ENCODE measurements at regions of chr19 and their contacts with region 1.

Region 1: GRCh38 chr19:19139876-19140229 is 1.6 kb upstream of the TMEM161A start:
- H3K4me3 ChIP-seq: no peak overlapping the region
- H3K27ac ChIP-seq: no peak overlapping the region
- H3K4me1 ChIP-seq: peaks cover 3% of the 10 kb centered on the region; the same call in 1 of the 2 replicates
- CTCF ChIP-seq: no peak

Region 2: DNA sequence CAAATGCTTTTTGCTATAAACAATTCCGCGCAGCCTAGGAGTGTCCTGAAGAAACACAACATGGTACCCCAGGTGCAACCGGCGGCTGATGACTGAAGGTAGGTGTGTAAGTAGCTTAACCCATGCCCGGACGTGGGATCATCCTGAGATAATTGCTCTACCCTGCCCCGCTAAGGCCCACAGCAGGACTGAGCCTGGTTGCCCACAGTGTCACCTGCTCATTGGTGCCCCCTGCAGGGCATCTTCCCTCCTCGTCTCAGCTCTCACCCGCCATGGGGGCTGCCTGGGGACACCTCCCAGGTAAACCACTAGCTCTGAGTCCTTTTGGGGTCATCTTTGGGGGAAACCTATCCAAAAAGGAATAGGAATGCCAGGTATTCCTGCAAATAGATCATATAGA is 23.9 kb before region 1 on chr19:
- CTCF ChIA-PET with region 1: interaction called, 12 read pairs
- POLR2A ChIA-PET with region 1: no interaction called
- H3K4me3 ChIP-seq: no peak overlapping the region
- H3K27ac ChIP-seq: no peak overlapping the region
- H3K4me1 ChIP-seq: 0 out of 2 replicates have a peak, but pooled peaks cover 3% of the 10 kb centered on the region
- CTCF ChIP-seq: peak; percentile 40; the same call in 1 of the 2 replicates

Region 3: GRCh38 chr19:19170053-19170872 is 30.4 kb after region 1 on chr19 and contains the start of gene MEF2B:
- CTCF ChIA-PET with region 1: interaction called, 26 read pairs
- POLR2A ChIA-PET with region 1: no interaction called
- H3K4me3 ChIP-seq: peak within 1 kb of the TSS; percentile 6; the same call in 1 of the 2 replicates
- H3K27ac ChIP-seq: no peak within 1 kb of the TSS
- H3K4me1 ChIP-seq: no peaks in the 10 kb centered on the region
- CTCF ChIP-seq: no peak

Region 4: DNA sequence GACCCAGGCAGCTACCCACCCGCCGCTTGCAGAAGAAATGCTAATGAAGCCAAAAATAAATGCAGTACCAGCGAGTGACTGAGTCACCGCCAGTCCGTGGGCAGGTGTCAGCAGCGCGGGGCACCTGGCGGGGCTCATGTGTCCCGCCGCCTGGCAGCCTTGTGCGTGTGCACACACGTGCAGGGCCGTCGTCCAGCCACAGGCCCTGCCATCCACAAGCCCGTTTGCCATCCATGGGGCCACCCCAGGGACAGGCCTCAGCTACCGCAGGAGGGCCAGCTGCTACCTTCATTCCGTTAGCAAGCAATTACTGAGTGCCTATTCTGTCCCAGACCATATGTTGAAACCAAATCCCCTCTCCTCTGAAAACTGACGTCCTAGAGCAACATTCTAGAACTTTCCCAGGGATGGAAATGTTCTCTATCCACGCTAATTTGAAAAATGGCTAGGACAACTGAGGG is 92.4 kb after region 1 on chr19:
- CTCF ChIA-PET with region 1: no interaction called
- POLR2A ChIA-PET with region 1: interaction called, 13 read pairs
- H3K4me3 ChIP-seq: no peak overlapping the region
- H3K27ac ChIP-seq: no peak overlapping the region
- H3K4me1 ChIP-seq: no peaks in the 10 kb centered on the region
- CTCF ChIP-seq: no peak

Measured in HEK293 (cell line).